HAP-1 (cell line): ENCODE measurements at regions of chr16 and their contacts with region 1.

Region 1: GRCh38 chr16:59573528-59574271 is 839.6 kb upstream of the GOT2 start:
- DNase-seq: no peak
- H3K4me3 ChIP-seq: no peak overlapping the region
- H3K4me1 ChIP-seq: no peaks in the 10 kb centered on the region
- H3K27me3 ChIP-seq: no peaks in the 10 kb centered on the region; the same call in 1 of the 2 replicates

Region 2: DNA sequence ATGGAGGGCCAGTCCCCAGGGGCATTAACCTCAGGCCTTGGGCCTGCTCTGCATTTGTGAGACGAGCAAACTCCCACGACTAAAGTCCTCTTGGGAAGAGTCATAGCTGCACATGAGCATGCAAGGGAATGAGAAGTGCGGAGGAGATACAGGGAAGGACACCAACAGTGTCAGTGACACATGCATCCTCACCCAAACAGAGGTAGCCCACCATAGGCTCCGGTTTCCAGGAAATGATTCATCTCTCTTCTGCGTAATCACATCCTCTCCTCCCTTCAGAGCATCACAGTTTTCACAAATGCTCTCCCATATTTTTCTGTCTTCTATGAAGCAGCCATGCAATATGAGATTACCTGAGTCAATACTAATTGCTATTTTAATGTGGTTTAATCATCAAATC is 113.9 kb before region 1 on chr16:
- in situ Hi-C with region 1: loop called (anchors 25 kb)
- DNase-seq: no peak
- H3K4me3 ChIP-seq: no peak overlapping the region
- H3K4me1 ChIP-seq: no peaks in the 10 kb centered on the region
- H3K27me3 ChIP-seq: no peaks in the 10 kb centered on the region